ENCODE measurements at regions of chr6 and their contacts with region 1.

Region 1: GRCh38 chr6:139375232-139376016 is 976 bp upstream of the CITED2 start:
- DNase-seq: peak; percentile 98
- H3K4me3 Mint-ChIP-seq: peak overlapping the region; percentile 97
- H3K27ac Mint-ChIP-seq: peak overlapping the region; percentile 97
- H3K4me1 Mint-ChIP-seq: peaks cover 33% of the 10 kb centered on the region
- H3K27me3 Mint-ChIP-seq: no peaks in the 10 kb centered on the region
- CTCF ChIP-seq: no peak

Region 2: GRCh38 chr6:139327038-139327437 is 48.4 kb before region 1 on chr6:
- CTCF ChIA-PET with region 1: no interaction called
- POLR2A ChIA-PET with region 1: no interaction called
- intact Hi-C with region 1: no loop called
- DNase-seq: no peak
- H3K4me3 Mint-ChIP-seq: no peak overlapping the region
- H3K27ac Mint-ChIP-seq: no peak overlapping the region
- H3K4me1 Mint-ChIP-seq: peaks cover 4% of the 10 kb centered on the region
- H3K27me3 Mint-ChIP-seq: no peaks in the 10 kb centered on the region
- CTCF ChIP-seq: no peak

Region 3: DNA sequence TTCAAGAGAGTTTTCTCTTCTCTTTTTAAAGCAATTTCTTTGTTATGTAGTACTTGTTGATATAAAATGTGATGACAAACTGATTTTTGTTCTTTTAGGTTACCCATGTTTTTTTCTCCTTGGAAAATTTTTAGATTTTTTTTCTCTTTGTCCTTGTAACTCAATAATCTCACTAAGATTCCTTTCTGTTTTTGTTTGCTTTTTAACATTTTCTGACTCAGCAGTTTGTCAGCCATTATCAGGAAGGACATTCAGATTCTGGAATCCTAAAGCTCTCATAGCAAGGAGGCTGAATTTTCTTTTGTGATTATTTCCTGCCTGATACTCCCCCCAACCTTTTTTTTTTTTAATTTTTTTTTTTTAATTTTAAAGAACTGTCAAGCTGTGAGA is 74.2 kb after region 1 on chr6:
- CTCF ChIA-PET with region 1: no interaction called
- POLR2A ChIA-PET with region 1: interaction called, 10 read pairs
- intact Hi-C with region 1: no loop called
- DNase-seq: no peak
- H3K4me3 Mint-ChIP-seq: no peak overlapping the region
- H3K27ac Mint-ChIP-seq: peak overlapping the region; percentile 30
- H3K4me1 Mint-ChIP-seq: peaks cover 22% of the 10 kb centered on the region
- H3K27me3 Mint-ChIP-seq: no peaks in the 10 kb centered on the region
- CTCF ChIP-seq: no peak

Region 4: GRCh38 chr6:139699335-139699734 is 323.9 kb after region 1 on chr6:
- CTCF ChIA-PET with region 1: interaction called, 3 read pairs
- POLR2A ChIA-PET with region 1: interaction called, 36 read pairs
- intact Hi-C with region 1: loop called (anchors 2 kb)
- DNase-seq: peak; percentile 80
- H3K4me3 Mint-ChIP-seq: peak overlapping the region; percentile 19
- H3K27ac Mint-ChIP-seq: peak overlapping the region; percentile 81
- H3K4me1 Mint-ChIP-seq: peaks cover 19% of the 10 kb centered on the region
- H3K27me3 Mint-ChIP-seq: no peaks in the 10 kb centered on the region
- CTCF ChIP-seq: no peak

Region 5: DNA sequence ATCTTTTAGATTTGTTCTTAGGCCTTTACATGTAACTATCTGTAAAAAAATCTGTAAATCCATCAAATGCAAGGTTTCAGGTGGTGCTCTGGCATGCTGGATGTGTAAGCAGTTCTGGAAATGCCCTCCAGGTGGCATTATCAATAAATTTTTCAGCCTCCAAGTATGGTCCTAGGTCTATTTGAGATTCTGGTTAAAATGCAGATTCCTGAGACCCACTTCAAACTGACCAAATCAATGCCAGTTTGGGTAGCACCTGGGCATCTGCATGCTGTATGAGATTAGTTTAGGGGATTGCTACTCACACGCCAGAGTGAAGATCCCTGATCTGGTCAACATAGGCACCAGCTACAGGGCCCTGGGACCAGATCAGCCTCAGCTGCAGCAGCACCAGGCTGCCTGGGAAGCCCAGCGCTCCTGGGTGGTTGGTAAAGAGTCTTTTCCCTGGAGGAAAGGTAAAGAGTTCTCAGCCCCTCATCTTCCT is 506.3 kb after region 1 on chr6:
- CTCF ChIA-PET with region 1: interaction called, 5 read pairs
- POLR2A ChIA-PET with region 1: interaction called, 11 read pairs
- intact Hi-C with region 1: loop called (anchors 2 kb)
- DNase-seq: peak; percentile 51
- H3K4me3 Mint-ChIP-seq: no peak overlapping the region
- H3K27ac Mint-ChIP-seq: no peak overlapping the region
- H3K4me1 Mint-ChIP-seq: peaks cover 5% of the 10 kb centered on the region
- H3K27me3 Mint-ChIP-seq: no peaks in the 10 kb centered on the region
- CTCF ChIP-seq: peak; percentile 46

Region 6: DNA sequence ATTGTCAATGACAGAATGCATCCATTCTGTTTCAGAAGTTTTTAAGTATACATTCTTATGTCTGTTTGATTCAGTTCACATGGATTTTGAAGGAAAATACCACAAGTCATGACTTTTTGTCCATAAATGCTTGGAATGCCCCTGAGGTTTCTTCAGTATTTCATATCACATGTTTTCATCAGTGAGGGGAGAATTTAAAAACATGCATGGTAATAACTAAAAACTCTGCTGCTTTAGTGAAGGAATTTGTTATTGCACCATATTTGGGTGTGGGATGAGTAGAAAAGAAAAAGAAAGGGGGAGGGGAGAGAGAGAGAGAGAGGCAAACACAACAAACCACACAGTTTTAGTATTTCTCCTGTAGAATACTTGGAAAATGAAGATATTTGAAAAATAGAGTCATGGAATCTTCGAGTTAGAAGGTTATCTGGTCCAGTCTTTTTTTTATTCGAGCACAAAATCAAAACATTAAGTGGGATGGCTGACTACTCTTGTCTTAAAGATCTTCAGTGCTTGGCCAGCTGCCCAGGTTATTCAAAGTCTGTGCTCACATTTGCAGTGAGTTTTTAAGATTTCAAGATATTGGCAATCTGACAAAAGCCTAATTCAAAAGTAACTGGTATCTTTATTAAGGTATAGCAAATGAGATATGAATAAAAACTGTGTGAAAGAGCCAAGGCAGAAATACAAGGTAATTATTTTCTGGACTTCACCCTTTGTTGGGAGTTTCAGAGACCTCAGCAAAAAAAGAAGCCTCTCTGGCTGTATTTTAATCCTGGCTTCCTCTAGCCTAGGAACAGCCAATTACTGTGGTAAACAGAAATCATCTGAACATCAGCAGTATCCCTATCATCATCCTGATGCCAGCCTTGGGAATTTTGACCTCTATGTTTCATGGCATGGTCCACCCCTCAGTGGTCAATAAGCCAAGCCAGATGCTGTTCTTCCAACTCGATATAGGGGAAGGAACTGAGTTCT is 686.9 kb after region 1 on chr6:
- CTCF ChIA-PET with region 1: interaction called, 3 read pairs
- POLR2A ChIA-PET with region 1: interaction called, 18 read pairs
- intact Hi-C with region 1: no loop called
- DNase-seq: peak; percentile 89
- H3K4me3 Mint-ChIP-seq: peak overlapping the region; percentile 59
- H3K27ac Mint-ChIP-seq: peak overlapping the region; percentile 85
- H3K4me1 Mint-ChIP-seq: peaks cover 41% of the 10 kb centered on the region
- H3K27me3 Mint-ChIP-seq: no peaks in the 10 kb centered on the region
- CTCF ChIP-seq: no peak

Region 7: DNA sequence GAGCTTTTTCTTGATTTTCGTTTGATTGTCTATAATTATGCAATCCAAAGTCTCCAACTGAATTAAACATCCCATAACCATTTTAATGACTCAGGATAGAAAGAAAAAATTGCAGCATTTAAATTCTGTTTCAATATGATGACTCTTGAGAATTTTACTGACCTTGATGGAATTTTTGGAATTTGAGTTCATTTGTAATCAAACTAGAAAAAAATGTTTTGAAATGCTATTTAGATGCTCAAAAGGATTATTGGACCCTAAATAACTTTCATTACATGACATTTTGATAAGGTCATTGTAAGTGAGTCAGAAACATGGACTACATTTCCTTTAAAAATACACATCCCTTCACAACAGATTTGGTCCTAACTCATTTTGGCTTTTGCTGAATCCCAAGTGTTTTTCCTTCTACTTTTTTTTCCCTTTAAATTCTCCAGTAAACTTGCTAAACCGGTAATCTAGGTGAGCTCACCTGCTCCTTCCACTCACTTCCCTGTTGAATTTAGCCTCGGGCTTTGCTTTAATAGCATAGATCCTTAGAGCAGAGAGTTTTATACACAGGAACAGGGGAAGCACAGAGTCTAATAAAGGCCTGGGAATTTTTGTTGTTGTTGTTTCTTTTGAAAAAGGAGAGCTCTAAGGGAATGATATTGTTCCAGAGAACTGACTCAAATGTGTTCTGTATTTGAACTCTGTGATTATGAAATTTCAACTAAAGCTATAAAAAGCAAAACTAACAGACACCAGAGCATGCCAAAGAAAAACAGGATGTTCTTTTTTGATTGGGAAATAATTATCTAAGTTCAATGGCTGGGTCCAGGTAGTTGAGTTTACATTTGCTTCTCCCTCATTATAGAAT is 1087.3 kb after region 1 on chr6:
- CTCF ChIA-PET with region 1: no interaction called
- POLR2A ChIA-PET with region 1: interaction called, 16 read pairs
- intact Hi-C with region 1: no loop called
- DNase-seq: peak; percentile 75
- H3K4me3 Mint-ChIP-seq: no peak overlapping the region
- H3K27ac Mint-ChIP-seq: peak overlapping the region; percentile 47
- H3K4me1 Mint-ChIP-seq: peaks cover 16% of the 10 kb centered on the region
- H3K27me3 Mint-ChIP-seq: no peaks in the 10 kb centered on the region
- CTCF ChIP-seq: no peak

Measured in MCF 10A (cell line).